ENCODE measurements at regions of chr17 and their contacts with region 1.

Region 1: GRCh38 chr17:35969558-35970380 is 11.5 kb downstream of the CCL16 start:
- DNase-seq: peak; percentile 4 to 67 (median 41)
- ATAC-seq: peak; percentile 73
- H3K4me3 ChIP-seq: no peak overlapping the region
- H3K4me3 Mint-ChIP-seq: no peak overlapping the region
- H3K27ac ChIP-seq: no peak overlapping the region
- H3K27ac Mint-ChIP-seq: no peak overlapping the region
- H3K4me1 ChIP-seq: no peaks in the 10 kb centered on the region
- H3K4me1 Mint-ChIP-seq: peaks cover 0 to 4% (median 0%) of the 10 kb centered on the region in 7 donors
- H3K27me3 ChIP-seq: no peaks in the 10 kb centered on the region
- H3K27me3 Mint-ChIP-seq: peaks cover 0 to 19% (median 0%) of the 10 kb centered on the region in 5 donors

Region 2: DNA sequence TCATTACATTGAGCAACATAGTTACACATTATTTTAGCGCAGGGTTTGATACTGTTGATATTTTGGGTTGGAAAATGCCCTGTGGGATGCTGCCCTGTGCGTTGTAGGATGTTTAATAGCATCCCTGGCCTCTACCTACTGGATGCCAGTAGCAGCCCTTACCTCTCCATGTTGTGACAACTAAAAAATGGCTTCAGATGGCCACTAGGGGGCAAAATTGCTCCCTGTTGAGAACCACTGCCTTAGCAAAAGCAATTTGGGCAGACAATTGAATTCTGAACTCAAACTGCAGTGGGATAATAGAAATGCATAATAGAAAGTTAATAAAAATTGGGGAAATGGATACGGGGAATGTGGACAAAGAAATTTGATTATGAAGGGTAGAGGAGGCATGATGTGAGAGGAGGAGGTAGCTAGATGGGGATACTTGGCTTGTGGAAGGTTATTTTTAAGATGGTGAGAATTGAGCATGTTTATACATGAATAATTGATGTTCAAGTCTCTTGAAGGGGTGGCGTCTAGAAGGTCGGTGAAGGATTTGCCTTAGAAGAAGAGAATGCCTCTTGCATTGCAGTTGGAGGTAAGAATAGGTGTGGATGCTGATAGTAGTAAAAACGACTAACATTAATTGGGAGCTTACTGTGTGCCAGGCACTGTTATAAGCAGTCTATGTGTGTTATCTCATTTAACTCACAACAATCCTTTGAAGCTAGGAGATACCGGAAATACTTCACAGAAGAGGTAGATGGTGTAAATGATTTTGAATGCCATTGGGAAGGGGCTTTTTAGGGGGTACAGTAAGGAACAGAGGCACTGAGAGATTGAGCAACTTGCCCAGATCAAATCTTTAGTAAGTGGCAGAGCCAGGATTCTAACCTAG is 120.1 kb before region 1 on chr17:
- CTCF ChIA-PET with region 1: no interaction called
- POLR2A ChIA-PET with region 1: no interaction called
- intact Hi-C with region 1: loop called in 1 of 2 experiments (anchors 5 kb)
- DNase-seq: peak in 8 of 9 donors; percentile 12 to 57 (median 41)
- ATAC-seq: peak; percentile 66
- H3K4me3 ChIP-seq: no peak overlapping the region
- H3K4me3 Mint-ChIP-seq: no peak overlapping the region
- H3K27ac ChIP-seq: no peak overlapping the region
- H3K27ac Mint-ChIP-seq: peak overlapping the region in 5 of 9 donors; percentile 2 to 27 (median 17)
- H3K4me1 ChIP-seq: peaks cover 0 to 13% of the 10 kb centered on the region in 2 donors
- H3K4me1 Mint-ChIP-seq: peaks cover 0 to 19% (median 5%) of the 10 kb centered on the region in 7 donors
- H3K27me3 ChIP-seq: no peaks in the 10 kb centered on the region
- H3K27me3 Mint-ChIP-seq: no peaks in the 10 kb centered on the region

Region 3: GRCh38 chr17:35944151-35944550 is 25.6 kb before region 1 on chr17:
- CTCF ChIA-PET with region 1: no interaction called
- POLR2A ChIA-PET with region 1: no interaction called
- intact Hi-C with region 1: no loop called
- DNase-seq: no peak
- ATAC-seq: no peak
- H3K4me3 ChIP-seq: no peak overlapping the region
- H3K4me3 Mint-ChIP-seq: no peak overlapping the region
- H3K27ac ChIP-seq: no peak overlapping the region
- H3K27ac Mint-ChIP-seq: peak overlapping the region in 1 of 9 donors; percentile 71
- H3K4me1 ChIP-seq: no peaks in the 10 kb centered on the region
- H3K4me1 Mint-ChIP-seq: peaks cover 0 to 2% (median 0%) of the 10 kb centered on the region in 7 donors
- H3K27me3 ChIP-seq: no peaks in the 10 kb centered on the region
- H3K27me3 Mint-ChIP-seq: peaks cover 0 to 21% (median 6%) of the 10 kb centered on the region in 5 donors

Region 4: GRCh38 chr17:36001862-36002603 is 32.3 kb after region 1 on chr17:
- CTCF ChIA-PET with region 1: no interaction called
- POLR2A ChIA-PET with region 1: no interaction called
- intact Hi-C with region 1: no loop called
- DNase-seq: no peak
- ATAC-seq: no peak
- H3K4me3 ChIP-seq: no peak overlapping the region
- H3K4me3 Mint-ChIP-seq: no peak overlapping the region
- H3K27ac ChIP-seq: no peak overlapping the region
- H3K27ac Mint-ChIP-seq: no peak overlapping the region
- H3K4me1 ChIP-seq: peaks cover 0 to 13% of the 10 kb centered on the region in 2 donors
- H3K4me1 Mint-ChIP-seq: peaks cover 0 to 7% (median 6%) of the 10 kb centered on the region in 7 donors
- H3K27me3 ChIP-seq: no peaks in the 10 kb centered on the region
- H3K27me3 Mint-ChIP-seq: peaks cover 0 to 21% (median 0%) of the 10 kb centered on the region in 5 donors

Region 5: GRCh38 chr17:36072431-36073121 is 102.8 kb after region 1 on chr17:
- CTCF ChIA-PET with region 1: interaction called, 4 read pairs
- POLR2A ChIA-PET with region 1: no interaction called
- intact Hi-C with region 1: loop called (anchors 1 to 2 kb)
- DNase-seq: peak in 5 of 9 donors; percentile 12 to 76 (median 21)
- ATAC-seq: peak; percentile 84
- H3K4me3 ChIP-seq: no peak overlapping the region
- H3K4me3 Mint-ChIP-seq: peak overlapping the region in 1 of 10 donors; percentile 9
- H3K27ac ChIP-seq: no peak overlapping the region
- H3K27ac Mint-ChIP-seq: no peak overlapping the region
- H3K4me1 ChIP-seq: peaks cover 0 to 9% of the 10 kb centered on the region in 2 donors
- H3K4me1 Mint-ChIP-seq: peaks cover 0 to 9% (median 3%) of the 10 kb centered on the region in 7 donors
- H3K27me3 ChIP-seq: no peaks in the 10 kb centered on the region
- H3K27me3 Mint-ChIP-seq: peaks cover 0 to 22% (median 4%) of the 10 kb centered on the region in 5 donors

Region 6: DNA sequence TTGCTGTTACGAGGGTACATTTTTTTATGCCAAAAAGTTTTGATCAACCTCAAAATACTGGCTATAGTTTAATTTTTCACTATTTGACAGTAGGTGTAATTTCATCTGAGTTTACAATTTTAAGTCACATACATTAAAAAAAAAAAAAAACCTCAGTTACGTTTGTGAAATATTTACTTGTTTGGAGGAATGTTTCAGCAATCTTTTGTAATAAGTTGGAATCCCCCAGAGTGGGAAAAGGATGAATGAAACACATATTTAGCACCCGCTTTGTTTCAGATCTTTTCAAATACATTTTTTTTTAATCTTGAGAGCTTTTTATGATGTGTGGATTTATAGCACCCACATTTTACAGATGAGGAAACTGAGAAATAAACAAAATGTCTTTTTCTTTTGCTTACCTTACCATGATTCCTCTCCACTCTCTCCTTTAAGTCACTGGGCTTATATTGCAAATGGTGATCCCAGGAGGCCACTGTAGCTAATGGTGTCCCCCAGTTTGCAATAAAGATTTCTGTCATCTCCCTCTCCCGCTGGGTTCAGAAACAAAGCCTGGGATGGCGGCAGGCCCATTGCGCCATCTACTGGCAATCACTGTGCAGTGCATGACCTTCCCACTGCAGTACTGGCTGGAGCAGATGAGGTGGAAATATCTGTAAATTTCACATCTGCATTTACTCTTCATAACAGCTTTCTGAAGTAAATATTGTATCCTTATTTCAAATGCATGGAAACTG is 179.0 kb after region 1 on chr17:
- CTCF ChIA-PET with region 1: interaction called, 3 read pairs
- POLR2A ChIA-PET with region 1: no interaction called
- intact Hi-C with region 1: loop called (anchors 1 kb)
- DNase-seq: peak; percentile 19 to 65 (median 41)
- ATAC-seq: peak; percentile 93
- H3K4me3 ChIP-seq: no peak overlapping the region
- H3K4me3 Mint-ChIP-seq: peak overlapping the region in 2 of 10 donors; percentile 25 to 69
- H3K27ac ChIP-seq: no peak overlapping the region
- H3K27ac Mint-ChIP-seq: no peak overlapping the region
- H3K4me1 ChIP-seq: no peaks in the 10 kb centered on the region
- H3K4me1 Mint-ChIP-seq: peaks cover 0 to 10% (median 6%) of the 10 kb centered on the region in 7 donors
- H3K27me3 ChIP-seq: no peaks in the 10 kb centered on the region
- H3K27me3 Mint-ChIP-seq: peaks cover 11 to 51% (median 24%) of the 10 kb centered on the region in 5 donors

Region 7: GRCh38 chr17:36486204-36487194 is 516.7 kb after region 1 on chr17 and contains the start of gene ZNHIT3:
- CTCF ChIA-PET with region 1: interaction called, 3 read pairs
- POLR2A ChIA-PET with region 1: no interaction called
- intact Hi-C with region 1: loop called (anchors 1 to 2 kb)
- DNase-seq: peak; percentile 74 to 94 (median 91)
- ATAC-seq: peak; percentile 98
- H3K4me3 ChIP-seq: peak within 1 kb of the TSS; percentile 82
- H3K4me3 Mint-ChIP-seq: peak within 1 kb of the TSS; percentile 87 to 100 (median 100)
- H3K27ac ChIP-seq: peak within 1 kb of the TSS; percentile 86
- H3K27ac Mint-ChIP-seq: peak within 1 kb of the TSS; percentile 94 to 100 (median 99)
- H3K4me1 ChIP-seq: peaks cover 29 to 41% of the 10 kb centered on the region in 2 donors
- H3K4me1 Mint-ChIP-seq: peaks cover 39 to 70% (median 49%) of the 10 kb centered on the region in 7 donors
- H3K27me3 ChIP-seq: no peaks in the 10 kb centered on the region
- H3K27me3 Mint-ChIP-seq: peaks cover 8 to 11% (median 10%) of the 10 kb centered on the region in 5 donors
- total RNA-seq, gene ZNHIT3: 38.4 to 59.9 (median 57.4) TPM

Region 8: GRCh38 chr17:37239690-37240334 is 1270.0 kb after region 1 on chr17:
- CTCF ChIA-PET with region 1: no interaction called
- POLR2A ChIA-PET with region 1: no interaction called
- intact Hi-C with region 1: loop called in 1 of 2 experiments (anchors 5 kb)
- DNase-seq: peak in 4 of 9 donors; percentile 2 to 11 (median 6)
- ATAC-seq: no peak
- H3K4me3 ChIP-seq: no peak overlapping the region
- H3K4me3 Mint-ChIP-seq: no peak overlapping the region
- H3K27ac ChIP-seq: no peak overlapping the region
- H3K27ac Mint-ChIP-seq: peak overlapping the region in 1 of 9 donors; percentile 69
- H3K4me1 ChIP-seq: no peaks in the 10 kb centered on the region
- H3K4me1 Mint-ChIP-seq: peaks cover 0 to 4% (median 0%) of the 10 kb centered on the region in 7 donors
- H3K27me3 ChIP-seq: no peaks in the 10 kb centered on the region
- H3K27me3 Mint-ChIP-seq: no peaks in the 10 kb centered on the region